Prostate gland (tissue), 2 donors: ENCODE measurements at regions of chr4 and their contacts with region 1.

Region 1: DNA sequence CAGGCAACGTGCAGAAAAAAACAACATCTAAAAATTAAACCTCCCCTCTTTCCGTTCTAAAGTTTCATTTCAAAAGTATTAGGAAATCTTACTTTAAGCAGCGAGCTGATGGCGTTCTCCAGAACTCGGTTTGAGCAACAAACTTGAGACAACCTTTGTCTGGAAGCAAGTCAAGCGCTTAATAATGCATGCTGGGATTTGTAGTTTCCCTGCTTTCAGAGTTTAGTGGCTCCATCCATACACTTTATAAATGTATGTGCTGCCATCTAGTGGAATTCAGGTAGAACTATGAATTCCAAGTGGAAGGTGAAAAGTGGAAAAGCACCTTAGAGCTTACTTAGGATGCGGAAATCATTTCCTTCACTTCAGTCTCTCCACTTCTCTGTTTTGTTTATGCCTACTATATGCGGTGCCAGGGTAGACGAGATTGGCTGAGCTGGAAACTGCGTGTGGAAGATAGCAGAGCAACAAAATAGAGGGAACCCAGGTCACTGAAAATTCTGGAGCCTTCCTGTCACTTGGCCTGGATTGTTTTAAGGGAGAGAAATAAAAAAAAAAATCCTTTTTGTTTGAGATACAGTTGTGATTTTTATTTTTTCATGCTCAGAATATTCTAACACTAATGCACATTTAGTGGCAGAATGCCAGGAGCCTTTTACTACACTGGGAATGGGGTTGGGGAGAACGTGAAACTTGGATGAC is at the start of gene BDH2:
- DNase-seq: peak; percentile 76
- H3K4me3 ChIP-seq: peak within 1 kb of the TSS; percentile 32 to 33
- H3K27ac ChIP-seq: peak within 1 kb of the TSS; percentile 55 to 63
- H3K4me1 ChIP-seq: no peaks in the 10 kb centered on the region
- H3K27me3 ChIP-seq: no peaks in the 10 kb centered on the region
- CTCF ChIP-seq: peak; percentile 52 to 92 (median 88)
- POLR2A ChIP-seq: peak; percentile 54
- total RNA-seq, gene BDH2: 41.5 to 54.1 TPM

Region 2: DNA sequence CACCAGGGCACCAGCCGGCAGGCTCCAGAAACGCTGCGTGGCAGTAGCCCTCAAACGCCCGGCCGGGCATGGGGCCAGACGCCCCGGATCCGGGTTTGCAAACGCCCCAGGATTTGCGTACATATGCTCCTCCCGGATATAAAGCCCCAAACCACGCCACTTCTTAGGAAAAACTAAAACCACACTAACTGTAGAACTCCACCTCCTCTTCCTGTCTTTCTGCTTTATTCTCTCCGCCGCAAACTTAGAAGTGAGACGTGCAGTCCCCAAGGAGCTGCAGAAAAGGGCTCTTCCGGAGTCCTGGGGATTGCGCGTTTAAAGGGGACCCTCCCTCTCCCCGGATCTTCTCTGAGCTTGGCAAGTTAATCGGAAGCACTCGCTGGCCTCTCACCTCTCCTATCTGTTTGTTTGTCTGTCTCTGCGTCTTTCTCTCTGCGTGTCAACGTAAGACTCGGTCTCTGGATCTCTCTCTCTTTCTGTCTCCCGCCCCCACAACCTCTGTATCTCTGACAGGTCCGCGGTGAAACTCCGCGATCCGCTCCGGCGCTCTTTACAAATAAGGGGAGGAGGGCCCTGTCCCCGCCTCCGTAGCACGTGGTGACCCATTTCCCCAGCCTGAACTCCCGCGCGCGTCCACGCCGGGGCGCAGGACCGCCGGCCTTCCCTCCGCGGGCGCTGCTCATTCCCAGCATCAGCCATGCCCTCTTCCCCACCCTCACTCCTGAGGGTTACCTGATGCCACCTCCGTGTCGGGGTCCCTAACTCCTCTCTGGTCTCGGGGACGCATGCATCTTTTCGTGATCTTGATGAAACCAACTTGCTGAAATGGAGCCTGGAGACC is 754.7 kb before region 1 on chr4 and contains the start of gene SLC39A8:
- intact Hi-C with region 1: loop called (anchors 10 kb)
- DNase-seq: peak; percentile 82
- H3K4me3 ChIP-seq: peak within 1 kb of the TSS; percentile 51 to 65
- H3K27ac ChIP-seq: peak within 1 kb of the TSS; percentile 50 to 77
- H3K4me1 ChIP-seq: no peaks in the 10 kb centered on the region
- H3K27me3 ChIP-seq: no peaks in the 10 kb centered on the region
- CTCF ChIP-seq: peak; percentile 55 to 85 (median 77)
- POLR2A ChIP-seq: peak; percentile 47
- total RNA-seq, gene SLC39A8: 11.1 to 19.2 TPM

Region 3: GRCh38 chr4:102620697-102621497 is 478.9 kb before region 1 on chr4:
- intact Hi-C with region 1: loop called (anchors 5 kb)
- DNase-seq: no peak
- H3K4me3 ChIP-seq: no peak overlapping the region
- H3K27ac ChIP-seq: no peak overlapping the region
- H3K4me1 ChIP-seq: no peaks in the 10 kb centered on the region
- H3K27me3 ChIP-seq: no peaks in the 10 kb centered on the region
- CTCF ChIP-seq: peak in 3 of 4 experiments; percentile 47 to 77 (median 70)
- POLR2A ChIP-seq: no peak

Region 4: GRCh38 chr4:103019308-103020124 is 80.3 kb before region 1 on chr4 and contains the start of gene SLC9B1:
- intact Hi-C with region 1: loop called (anchors 5 kb)
- DNase-seq: peak; percentile 97
- H3K4me3 ChIP-seq: peak within 1 kb of the TSS; percentile 29 to 40
- H3K27ac ChIP-seq: peak within 1 kb of the TSS; percentile 87 to 88
- H3K4me1 ChIP-seq: no peaks in the 10 kb centered on the region
- H3K27me3 ChIP-seq: no peaks in the 10 kb centered on the region
- CTCF ChIP-seq: peak in 2 of 4 experiments; percentile 8 to 26
- POLR2A ChIP-seq: peak; percentile 72
- total RNA-seq, gene SLC9B1: 9.3 TPM in 1 of 2 donors, not detected in the other

Region 5: DNA sequence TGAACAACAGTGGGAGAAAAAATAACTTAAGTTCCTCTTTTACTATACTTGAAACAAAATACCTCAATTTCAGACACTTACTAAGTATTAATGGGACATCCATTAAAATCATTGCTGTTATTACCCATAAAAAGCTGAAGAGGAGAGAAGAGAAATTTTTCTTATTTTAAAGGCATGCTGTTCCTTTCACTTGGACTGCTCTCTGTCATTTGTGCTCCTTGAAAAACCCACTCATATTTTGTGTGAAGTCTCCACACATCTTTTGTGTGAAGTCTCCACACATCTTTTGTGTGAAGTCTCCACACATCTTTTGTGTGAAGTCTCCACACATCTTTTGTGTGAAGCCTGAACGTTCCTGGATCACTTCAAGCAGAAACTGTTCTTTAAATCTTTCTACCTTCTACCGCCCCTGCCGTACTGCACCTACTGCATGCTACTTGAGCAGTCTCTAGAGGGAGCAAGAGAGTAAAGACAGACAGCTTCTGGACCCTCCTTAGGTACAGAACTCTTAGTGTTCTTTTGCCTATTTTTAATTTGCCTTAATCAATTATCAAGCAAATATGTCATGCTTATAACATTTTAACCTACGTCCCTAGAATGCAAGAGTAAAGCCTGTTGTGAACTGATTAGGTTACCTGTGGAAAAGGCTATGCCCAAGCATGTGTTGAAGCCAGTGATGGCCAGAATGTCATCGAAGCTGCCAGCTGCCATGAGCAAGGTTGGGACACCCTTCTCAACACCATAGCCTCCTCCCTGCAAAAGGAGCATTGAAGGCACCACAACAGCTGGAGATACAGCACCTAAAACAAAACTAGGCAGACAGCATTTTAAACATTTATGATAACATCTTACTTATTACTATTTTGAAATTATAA is 53.2 kb before region 1 on chr4:
- intact Hi-C with region 1: loop called (anchors 10 kb)
- DNase-seq: no peak
- H3K4me3 ChIP-seq: no peak overlapping the region
- H3K27ac ChIP-seq: no peak overlapping the region
- H3K4me1 ChIP-seq: no peaks in the 10 kb centered on the region
- H3K27me3 ChIP-seq: no peaks in the 10 kb centered on the region
- CTCF ChIP-seq: peak in 3 of 4 experiments; percentile 37 to 46 (median 39)
- POLR2A ChIP-seq: no peak

Region 6: DNA sequence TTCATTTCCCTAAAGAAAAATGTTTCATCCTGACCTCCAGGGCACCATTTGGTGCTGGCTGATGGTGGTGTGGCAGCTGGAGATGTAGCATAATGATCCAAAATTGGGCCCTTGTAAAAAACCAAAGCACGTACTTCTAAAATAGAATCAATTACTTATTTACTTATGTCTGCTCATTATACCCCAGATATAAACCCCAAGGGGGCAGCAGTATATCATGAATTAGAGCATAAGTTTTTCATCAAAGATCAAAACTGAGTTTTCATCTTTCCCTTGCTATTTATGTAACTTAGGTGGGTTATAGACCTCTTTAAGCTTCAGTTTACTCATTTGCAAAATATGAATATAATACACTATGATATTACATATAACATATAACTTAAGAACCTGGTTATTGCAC is 378.9 kb after region 1 on chr4:
- intact Hi-C with region 1: no loop called
- DNase-seq: no peak
- H3K4me3 ChIP-seq: no peak overlapping the region
- H3K27ac ChIP-seq: no peak overlapping the region
- H3K4me1 ChIP-seq: no peaks in the 10 kb centered on the region
- H3K27me3 ChIP-seq: no peaks in the 10 kb centered on the region
- CTCF ChIP-seq: no peak
- POLR2A ChIP-seq: no peak